Transverse colon (tissue), 4 donors: ENCODE measurements at regions of chr4 and their contacts with region 1.

Region 1: DNA sequence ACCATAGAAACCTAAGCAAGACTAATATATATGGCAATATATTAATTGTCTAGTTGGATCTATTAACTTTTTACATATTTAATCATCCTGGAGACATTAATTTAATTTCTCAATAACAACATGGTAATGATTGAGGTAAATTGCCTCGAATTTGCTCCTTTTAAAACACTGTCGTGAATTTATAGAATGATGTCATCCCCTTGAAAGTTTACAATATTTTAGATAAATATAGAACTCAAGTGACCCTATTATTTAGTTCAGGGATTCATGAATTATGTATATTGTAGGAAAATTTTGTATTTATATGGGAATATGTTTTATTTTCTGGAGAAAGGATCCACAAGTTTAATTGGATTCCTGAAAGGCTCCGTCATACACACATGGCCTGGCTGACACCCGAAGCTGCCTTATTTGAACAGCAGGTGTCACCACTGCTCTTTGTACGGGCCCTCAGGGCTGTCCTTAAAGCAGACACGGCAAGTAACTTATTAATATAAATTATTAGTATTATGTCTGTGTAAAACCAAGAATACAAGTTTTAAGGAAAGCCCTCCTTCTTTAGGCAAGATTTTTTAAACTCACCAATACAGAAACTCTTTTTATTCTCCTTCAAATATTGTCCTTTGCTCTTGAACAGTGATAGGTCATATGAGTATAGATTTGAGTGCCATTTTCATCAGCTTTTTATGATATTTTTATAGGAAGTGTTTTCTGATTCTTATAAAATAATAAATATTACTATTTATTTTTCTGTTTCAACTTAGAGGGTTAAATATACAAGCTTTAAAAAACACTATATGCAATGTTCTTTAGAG is 1.9 kb upstream of the PLRG1 start:
- DNase-seq: peak; percentile 78
- H3K4me3 ChIP-seq: no peak overlapping the region
- H3K27ac ChIP-seq: peak overlapping the region in 3 of 4 donors; percentile 24 to 79 (median 38)
- H3K4me1 ChIP-seq: peaks cover 11 to 32% (median 17%) of the 10 kb centered on the region in 4 donors
- H3K27me3 ChIP-seq: no peaks in the 10 kb centered on the region
- CTCF ChIP-seq: peak; percentile 75 to 80 (median 80)
- EP300 ChIP-seq: no peak
- POLR2A ChIP-seq: no peak

Region 2: DNA sequence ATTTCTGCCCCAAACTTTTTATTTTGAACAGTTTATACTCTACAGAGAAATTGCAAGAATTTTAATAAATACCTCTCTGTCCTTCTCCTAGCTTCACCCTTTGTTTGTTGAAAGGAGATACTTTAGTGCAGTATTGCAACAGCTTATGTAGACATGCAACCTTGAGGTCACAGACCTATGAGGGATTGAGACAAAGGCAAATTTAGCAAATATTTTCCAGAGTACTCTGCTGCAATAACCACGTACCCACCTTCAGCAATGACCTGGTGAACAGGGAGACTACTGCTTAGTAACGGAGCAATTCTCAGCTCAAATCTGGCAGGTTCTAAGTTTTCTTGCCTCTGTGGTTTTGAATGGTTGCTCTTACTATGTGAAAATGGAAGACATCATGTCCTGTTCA is 25.2 kb after region 1 on chr4:
- in situ Hi-C with region 1: no loop called
- intact Hi-C with region 1: loop called (anchors 1 kb)
- DNase-seq: no peak
- H3K4me3 ChIP-seq: no peak overlapping the region
- H3K27ac ChIP-seq: no peak overlapping the region
- H3K4me1 ChIP-seq: no peaks in the 10 kb centered on the region
- H3K27me3 ChIP-seq: peaks cover 2% of the 10 kb centered on the region
- CTCF ChIP-seq: no peak
- EP300 ChIP-seq: no peak
- POLR2A ChIP-seq: no peak

Region 3: GRCh38 chr4:154618708-154619315 is 66.7 kb after region 1 on chr4:
- in situ Hi-C with region 1: loop called in 3 of 4 experiments (anchors 5 to 10 kb)
- intact Hi-C with region 1: no loop called
- DNase-seq: peak; percentile 70
- H3K4me3 ChIP-seq: no peak overlapping the region
- H3K27ac ChIP-seq: no peak overlapping the region
- H3K4me1 ChIP-seq: peaks cover 0 to 24% (median 7%) of the 10 kb centered on the region in 4 donors
- H3K27me3 ChIP-seq: no peaks in the 10 kb centered on the region
- CTCF ChIP-seq: peak; percentile 50 to 68 (median 63)
- EP300 ChIP-seq: no peak
- POLR2A ChIP-seq: no peak

Region 4: DNA sequence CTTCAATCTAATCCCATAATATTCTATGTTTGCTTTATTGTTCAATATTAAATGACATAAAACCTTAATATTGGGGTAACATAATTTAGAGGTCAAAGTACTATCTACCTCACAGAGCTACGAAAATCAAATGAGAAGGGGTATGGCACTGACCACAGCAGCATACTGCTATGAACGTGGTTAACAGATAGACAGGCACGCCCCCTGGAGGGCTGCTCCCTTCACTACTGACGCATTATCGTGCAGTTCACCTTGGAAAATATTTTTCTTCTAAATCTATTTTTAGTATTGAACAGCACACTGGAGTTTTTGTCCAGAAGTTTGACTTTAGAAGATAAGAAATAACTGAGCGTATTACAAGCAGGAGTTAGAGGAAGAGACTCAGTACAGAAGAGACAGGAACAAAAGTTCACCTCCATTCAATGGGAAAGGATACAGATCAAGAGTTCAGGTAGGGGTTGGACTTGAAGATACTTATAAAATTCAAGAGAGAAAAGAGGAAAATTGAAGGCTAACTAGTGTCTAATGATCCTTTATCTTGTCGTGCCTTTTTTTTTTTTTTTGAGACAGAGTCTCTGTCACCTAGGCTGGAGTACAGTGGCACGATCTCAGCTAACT is 802.0 kb after region 1 on chr4:
- in situ Hi-C with region 1: loop called in 2 of 4 experiments (anchors 25 kb)
- intact Hi-C with region 1: no loop called
- DNase-seq: peak; percentile 64
- H3K4me3 ChIP-seq: no peak overlapping the region
- H3K27ac ChIP-seq: no peak overlapping the region
- H3K4me1 ChIP-seq: no peaks in the 10 kb centered on the region
- H3K27me3 ChIP-seq: no peaks in the 10 kb centered on the region
- CTCF ChIP-seq: peak; percentile 55 to 75 (median 62)
- EP300 ChIP-seq: no peak
- POLR2A ChIP-seq: no peak